Activated T-helper 1 cell treated with anti-CD3 and anti-CD28 coated beads, Interleukin-12 subunit alpha, Interleukin-12 subunit beta, Interleukin-2, Interleukin-4 antibody, amounts not matched to agents 30 ng/mL and 10 ng/mL and 1 ng/mL, durations not matched to agents 14 hours and 24 hours and 36 hours (primary cell): ENCODE measurements at regions of chr21 and their contacts with region 1.

Region 1: GRCh38 chr21:34603002-34603709 is 11.8 kb downstream of the RCAN1 start:
- DNase-seq: peak; percentile 26
- H3K4me3 Mint-ChIP-seq: no peak overlapping the region
- H3K27ac Mint-ChIP-seq: no peak overlapping the region
- H3K4me1 Mint-ChIP-seq: no peaks in the 10 kb centered on the region
- H3K27me3 Mint-ChIP-seq: peaks cover 5% of the 10 kb centered on the region

Region 2: DNA sequence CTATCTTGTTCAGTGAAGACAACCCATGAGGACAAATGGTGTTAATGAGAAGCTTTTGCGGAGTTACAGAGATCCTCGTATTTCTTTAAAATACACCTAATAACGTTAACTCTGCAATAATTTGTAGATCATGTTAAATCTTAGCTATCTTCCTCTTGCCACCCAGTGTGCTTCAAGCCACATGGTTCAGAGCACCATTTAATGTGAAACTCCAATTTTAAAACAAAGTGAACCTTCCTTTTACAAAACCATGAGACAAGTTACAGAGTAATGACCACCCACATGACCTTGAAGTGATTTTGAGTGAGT is 241.1 kb before region 1 on chr21:
- intact Hi-C with region 1: loop called (anchors 1 kb)
- DNase-seq: no peak
- H3K4me3 Mint-ChIP-seq: no peak overlapping the region
- H3K27ac Mint-ChIP-seq: no peak overlapping the region
- H3K4me1 Mint-ChIP-seq: peaks cover 10% of the 10 kb centered on the region
- H3K27me3 Mint-ChIP-seq: peaks cover 41% of the 10 kb centered on the region

Region 3: DNA sequence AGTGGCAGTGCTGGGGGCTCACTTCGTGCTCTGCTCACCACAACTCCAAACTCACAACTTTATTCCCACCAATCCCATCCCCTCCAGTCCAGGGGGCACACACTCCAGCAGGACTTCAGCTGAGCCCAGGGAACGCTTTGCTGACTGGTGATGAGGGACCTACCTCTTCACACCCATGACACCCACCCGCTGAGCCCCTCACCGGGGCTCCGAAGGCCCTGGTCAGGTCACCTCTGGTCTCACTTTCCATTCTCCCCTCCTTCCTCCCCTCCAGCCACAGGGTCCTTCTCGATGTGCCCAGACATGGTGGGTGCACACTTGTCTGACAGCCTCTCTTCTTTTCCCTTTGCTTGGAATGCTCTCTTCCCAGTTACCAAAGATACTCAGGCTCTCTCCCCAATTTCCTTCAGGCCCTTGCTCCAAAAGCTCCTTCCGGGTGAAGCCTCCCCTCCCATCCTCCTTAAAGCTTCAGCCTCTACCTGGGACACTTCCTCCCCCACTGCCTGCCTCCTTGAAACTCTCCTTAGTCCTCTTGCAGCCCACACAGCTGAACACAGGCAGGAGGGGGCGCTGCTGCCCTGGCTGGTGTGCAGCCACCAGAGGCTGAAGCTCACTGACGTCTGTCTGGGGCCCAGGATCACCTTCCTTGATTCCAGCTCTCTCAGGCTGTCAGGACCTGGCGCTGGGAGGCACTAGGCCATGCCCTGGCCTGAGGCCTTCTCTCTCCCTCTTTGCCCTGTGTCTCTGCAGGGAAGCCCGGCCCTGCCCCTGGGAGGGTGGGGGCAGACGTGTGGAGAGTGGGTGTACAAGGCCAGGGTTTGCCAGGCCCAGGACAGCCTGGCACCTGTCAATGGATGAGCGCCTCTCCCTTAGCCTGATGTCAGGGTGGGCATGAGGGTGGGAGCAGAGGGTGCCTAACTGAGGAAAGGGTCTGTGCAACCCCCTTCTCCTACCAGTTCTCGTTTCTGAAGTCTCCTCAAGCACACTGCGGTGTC is 92.7 kb before region 1 on chr21:
- intact Hi-C with region 1: loop called (anchors 1 kb)
- DNase-seq: no peak
- H3K4me3 Mint-ChIP-seq: no peak overlapping the region
- H3K27ac Mint-ChIP-seq: no peak overlapping the region
- H3K4me1 Mint-ChIP-seq: no peaks in the 10 kb centered on the region
- H3K27me3 Mint-ChIP-seq: peaks cover 2% of the 10 kb centered on the region

Region 4: DNA sequence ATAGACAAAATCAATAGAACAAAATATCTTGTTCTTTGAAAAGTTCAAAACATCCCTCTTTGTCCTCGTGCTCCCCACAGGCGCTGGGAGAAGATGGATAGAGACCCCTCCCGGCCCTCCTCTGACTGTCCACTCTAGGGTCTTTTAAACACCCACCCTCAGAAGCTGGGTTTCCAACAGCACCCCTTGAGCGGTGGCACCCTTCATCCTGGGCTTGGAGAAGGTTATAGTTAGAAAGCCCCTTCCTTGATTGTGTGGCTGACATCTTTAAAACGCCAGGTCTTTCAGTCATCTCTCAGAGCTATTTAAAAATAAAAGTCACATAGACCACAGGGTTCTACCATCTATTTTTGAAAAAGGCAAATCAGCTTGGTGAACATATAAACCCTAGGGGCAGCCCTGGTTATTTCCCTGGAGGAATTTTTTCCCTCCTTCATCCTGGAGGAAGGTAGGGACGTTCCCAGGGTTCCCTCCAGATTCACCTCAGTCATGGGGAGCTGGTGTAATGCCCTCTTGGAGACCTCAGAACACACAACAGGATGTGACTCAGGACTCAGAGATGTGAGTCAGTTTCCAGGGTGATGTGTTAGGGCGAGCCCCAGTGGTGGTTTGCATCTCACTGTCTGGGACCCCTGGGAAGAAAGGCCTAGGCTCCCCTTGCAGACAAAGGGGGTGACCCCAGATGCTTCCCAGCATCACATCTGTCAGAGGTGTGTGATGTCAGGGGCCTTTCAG is 204.2 kb after region 1 on chr21:
- intact Hi-C with region 1: no loop called
- DNase-seq: peak; percentile 54
- H3K4me3 Mint-ChIP-seq: peak overlapping the region; percentile 56
- H3K27ac Mint-ChIP-seq: peak overlapping the region; percentile 93
- H3K4me1 Mint-ChIP-seq: peaks cover 92% of the 10 kb centered on the region
- H3K27me3 Mint-ChIP-seq: no peaks in the 10 kb centered on the region

Region 5: DNA sequence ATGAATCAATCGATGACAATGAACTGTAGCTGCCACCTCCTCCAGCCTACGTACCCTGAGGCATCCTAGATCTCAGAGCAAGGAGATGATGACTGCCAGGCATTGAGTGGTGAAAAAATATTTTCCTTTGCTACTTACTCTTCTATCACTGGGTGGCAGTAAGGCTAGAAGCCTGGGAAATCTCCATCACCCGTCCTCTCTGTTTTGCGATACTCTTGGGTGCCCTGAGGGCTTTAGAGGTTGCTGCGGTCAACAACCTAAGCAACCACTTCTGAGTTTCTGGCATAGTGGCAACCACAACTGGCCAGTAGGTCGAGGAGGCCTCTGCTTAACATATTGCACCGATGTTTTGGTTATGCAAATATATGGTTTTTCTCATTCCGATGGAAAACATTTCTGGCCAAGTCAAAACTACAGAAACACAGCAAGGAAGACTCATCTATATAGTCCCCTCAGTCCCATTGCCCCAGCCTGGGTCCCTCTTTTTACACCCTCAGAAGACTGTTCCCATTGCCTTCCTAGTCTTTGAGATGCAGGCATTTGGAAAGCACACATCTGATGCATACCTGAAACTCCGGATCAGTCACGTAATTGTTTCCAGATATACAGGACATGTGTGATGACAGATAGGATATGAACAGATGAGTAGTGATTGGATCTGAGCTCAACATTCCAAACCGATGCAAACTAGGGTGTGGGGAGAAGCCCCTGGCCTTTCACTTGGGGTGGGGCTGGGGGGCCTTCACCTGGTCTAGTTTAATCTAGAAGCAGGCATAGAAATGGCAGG is 309.2 kb after region 1 on chr21:
- intact Hi-C with region 1: no loop called
- DNase-seq: no peak
- H3K4me3 Mint-ChIP-seq: no peak overlapping the region
- H3K27ac Mint-ChIP-seq: no peak overlapping the region
- H3K4me1 Mint-ChIP-seq: peaks cover 36% of the 10 kb centered on the region
- H3K27me3 Mint-ChIP-seq: peaks cover 5% of the 10 kb centered on the region

Region 6: DNA sequence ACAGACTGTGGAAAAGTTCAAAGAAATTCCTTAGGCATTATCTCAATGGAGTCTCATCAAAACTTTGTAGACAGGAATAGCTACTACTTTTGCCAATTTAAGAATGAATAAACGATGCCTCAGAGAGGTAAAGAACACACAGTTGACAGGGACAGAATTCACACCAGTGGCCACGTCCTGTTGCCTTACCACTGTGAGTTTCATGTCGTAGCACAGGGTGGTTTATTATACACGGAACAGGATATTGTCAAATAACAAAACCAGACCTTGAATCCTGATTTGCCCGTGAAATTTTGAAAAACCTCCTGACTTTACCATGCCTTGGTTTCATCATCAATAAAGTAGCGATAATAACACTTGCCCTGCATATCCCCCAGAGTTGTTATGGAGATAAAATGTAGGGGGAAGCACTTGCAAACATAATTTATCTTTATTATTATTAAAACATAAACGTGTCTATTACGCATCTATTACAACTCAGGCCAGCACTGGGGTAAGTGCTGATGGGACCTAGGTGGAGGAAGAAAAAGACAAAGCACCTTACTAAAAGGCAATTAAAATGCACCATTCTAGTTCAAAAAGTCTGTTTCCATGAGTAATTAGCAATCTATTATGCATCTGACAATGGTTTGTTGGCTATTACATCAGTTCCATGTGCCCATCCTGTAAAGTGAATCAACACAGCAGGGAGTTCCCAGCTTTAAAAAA is 854.1 kb after region 1 on chr21:
- intact Hi-C with region 1: no loop called
- DNase-seq: peak; percentile 12
- H3K4me3 Mint-ChIP-seq: no peak overlapping the region
- H3K27ac Mint-ChIP-seq: no peak overlapping the region
- H3K4me1 Mint-ChIP-seq: peaks cover 5% of the 10 kb centered on the region
- H3K27me3 Mint-ChIP-seq: peaks cover 2% of the 10 kb centered on the region